Naive thymus-derived CD4-positive, alpha-beta T cell (primary cell): ENCODE measurements at regions of chr20 and their contacts with region 1.

Region 1: GRCh38 chr20:16729565-16730456 is at the start of gene SNRPB2:
- DNase-seq: peak; percentile 75 to 94 (median 90)
- ATAC-seq: peak; percentile 98
- H3K4me3 ChIP-seq: peak within 1 kb of the TSS; percentile 93
- H3K4me3 Mint-ChIP-seq: peak within 1 kb of the TSS; percentile 87 to 100 (median 99)
- H3K27ac ChIP-seq: peak within 1 kb of the TSS; percentile 94
- H3K27ac Mint-ChIP-seq: peak within 1 kb of the TSS; percentile 98 to 100 (median 100)
- H3K4me1 ChIP-seq: peaks cover 30 to 40% of the 10 kb centered on the region in 2 donors
- H3K4me1 Mint-ChIP-seq: peaks cover 32 to 60% (median 56%) of the 10 kb centered on the region in 7 donors
- H3K27me3 ChIP-seq: no peaks in the 10 kb centered on the region
- H3K27me3 Mint-ChIP-seq: peaks cover 9 to 25% (median 15%) of the 10 kb centered on the region in 5 donors
- total RNA-seq, gene SNRPB2: 30.8 to 97.0 (median 40.0) TPM

Region 2: DNA sequence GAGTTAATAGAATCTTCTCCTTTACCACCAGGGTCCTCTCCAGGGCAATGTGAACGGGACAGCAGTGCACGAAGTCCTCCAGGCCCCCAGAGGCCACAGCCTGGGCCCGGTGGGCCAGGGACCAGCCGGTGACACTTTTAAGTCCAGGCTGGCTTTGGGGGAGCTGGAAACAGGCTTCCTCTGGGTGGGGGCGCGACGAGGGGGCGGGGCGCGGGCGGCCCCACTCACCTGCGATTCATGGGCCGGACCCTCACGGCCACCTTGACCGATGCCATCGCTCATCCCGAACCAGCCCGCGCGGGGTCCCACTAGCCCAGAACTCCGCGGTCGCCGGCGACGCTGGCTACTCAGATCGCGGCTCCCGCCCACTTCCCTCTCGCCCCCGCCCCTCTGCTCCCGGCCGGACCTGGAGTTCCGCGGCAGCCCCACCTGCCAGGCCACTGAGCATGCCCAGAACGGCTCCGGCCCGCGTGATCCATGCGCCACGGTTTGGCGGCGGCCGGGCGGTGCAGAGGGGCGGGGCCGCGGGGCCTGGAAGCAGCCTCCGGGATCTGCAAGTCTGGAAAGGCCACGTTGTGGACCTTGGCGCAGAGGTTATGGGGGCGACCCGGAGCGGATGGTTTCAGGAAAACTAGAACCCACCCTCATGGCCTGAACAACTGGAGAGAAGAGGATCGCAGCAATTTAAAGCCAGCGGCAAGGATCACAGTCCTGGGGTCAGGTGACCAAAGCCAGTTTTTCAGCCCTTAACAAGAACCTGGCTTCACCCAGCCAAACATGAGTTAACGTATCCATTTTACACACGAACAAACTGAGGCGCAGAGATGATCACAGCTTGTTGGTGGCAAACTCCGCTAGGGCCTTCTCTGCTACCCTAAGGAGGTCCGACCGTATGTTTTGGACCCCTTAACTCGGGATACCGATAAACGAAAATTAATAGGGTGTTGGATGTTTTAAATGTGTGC is 156.5 kb before region 1 on chr20 and contains the start of gene KIF16B:
- CTCF ChIA-PET with region 1: no interaction called
- POLR2A ChIA-PET with region 1: interaction called, 19 read pairs
- intact Hi-C with region 1: loop called (anchors 1 kb)
- DNase-seq: peak; percentile 62 to 97 (median 76)
- ATAC-seq: peak; percentile 88
- H3K4me3 ChIP-seq: peak within 1 kb of the TSS; percentile 78
- H3K4me3 Mint-ChIP-seq: peak within 1 kb of the TSS; percentile 88 to 97 (median 92)
- H3K27ac ChIP-seq: peak within 1 kb of the TSS; percentile 61
- H3K27ac Mint-ChIP-seq: peak within 1 kb of the TSS; percentile 52 to 90 (median 85)
- H3K4me1 ChIP-seq: peaks cover 9 to 11% of the 10 kb centered on the region in 2 donors
- H3K4me1 Mint-ChIP-seq: peaks cover 16 to 61% (median 50%) of the 10 kb centered on the region in 7 donors
- H3K27me3 ChIP-seq: no peaks in the 10 kb centered on the region
- H3K27me3 Mint-ChIP-seq: peaks cover 0 to 8% (median 0%) of the 10 kb centered on the region in 5 donors
- total RNA-seq, gene KIF16B: 8.4 to 13.7 (median 11.0) TPM

Region 3: DNA sequence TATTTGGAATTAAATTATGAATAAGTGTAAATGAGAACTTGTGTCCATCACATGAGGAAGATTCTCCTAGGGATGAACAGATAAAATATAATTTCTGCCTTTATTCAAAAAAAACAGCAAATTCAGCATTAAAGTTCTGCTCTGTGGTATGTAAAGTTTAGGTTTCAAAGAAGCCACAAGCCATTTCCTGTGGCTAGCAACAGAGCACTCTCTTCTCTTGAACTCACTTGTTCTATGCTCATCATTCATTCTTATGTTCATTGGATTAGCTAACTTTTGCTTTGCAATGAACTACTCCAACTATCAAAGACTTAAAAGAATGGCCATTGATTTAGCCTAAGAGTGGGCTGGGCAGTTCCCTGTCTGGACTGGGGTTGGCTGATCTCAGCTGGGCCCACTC is 20.8 kb before region 1 on chr20:
- CTCF ChIA-PET with region 1: no interaction called
- POLR2A ChIA-PET with region 1: interaction called, 13 read pairs
- intact Hi-C with region 1: loop called (anchors 1 kb)
- DNase-seq: peak in 7 of 9 donors; percentile 16 to 62 (median 45)
- ATAC-seq: peak; percentile 79
- H3K4me3 ChIP-seq: no peak overlapping the region
- H3K4me3 Mint-ChIP-seq: peak overlapping the region in 9 of 10 donors; percentile 25 to 81 (median 63)
- H3K27ac ChIP-seq: no peak overlapping the region
- H3K27ac Mint-ChIP-seq: peak overlapping the region in 7 of 9 donors; percentile 32 to 79 (median 45)
- H3K4me1 ChIP-seq: peaks cover 17 to 27% of the 10 kb centered on the region in 2 donors
- H3K4me1 Mint-ChIP-seq: peaks cover 26 to 52% (median 42%) of the 10 kb centered on the region in 7 donors
- H3K27me3 ChIP-seq: no peaks in the 10 kb centered on the region
- H3K27me3 Mint-ChIP-seq: peaks cover 0 to 40% (median 9%) of the 10 kb centered on the region in 5 donors

Region 4: GRCh38 chr20:18137412-18138265 is 1407.8 kb after region 1 on chr20 and contains the starts of genes KAT14 and PET117:
- CTCF ChIA-PET with region 1: no interaction called
- POLR2A ChIA-PET with region 1: interaction called, 3 read pairs
- intact Hi-C with region 1: loop called (anchors 5 kb)
- DNase-seq: peak; percentile 85 to 96 (median 93)
- ATAC-seq: peak; percentile 98
- H3K4me3 ChIP-seq: peak within 1 kb of the TSS; percentile 99
- H3K4me3 Mint-ChIP-seq: peak within 1 kb of the TSS; percentile 76 to 92 (median 88)
- H3K27ac ChIP-seq: peak within 1 kb of the TSS; percentile 89
- H3K27ac Mint-ChIP-seq: peak within 1 kb of the TSS; percentile 85 to 95 (median 92)
- H3K4me1 ChIP-seq: peaks cover 13 to 15% of the 10 kb centered on the region in 2 donors
- H3K4me1 Mint-ChIP-seq: peaks cover 23 to 44% (median 31%) of the 10 kb centered on the region in 7 donors
- H3K27me3 ChIP-seq: no peaks in the 10 kb centered on the region
- H3K27me3 Mint-ChIP-seq: peaks cover 0 to 7% (median 0%) of the 10 kb centered on the region in 5 donors
- total RNA-seq, gene KAT14: 12.3 to 26.7 (median 16.2) TPM
- total RNA-seq, gene PET117: 9.0 to 20.3 (median 11.7) TPM

Region 5: GRCh38 chr20:18466894-18467730 is 1737.3 kb after region 1 on chr20 and contains the starts of genes DZANK1 and POLR3F:
- CTCF ChIA-PET with region 1: no interaction called
- POLR2A ChIA-PET with region 1: no interaction called
- intact Hi-C with region 1: loop called in 1 of 2 experiments (anchors 10 kb)
- DNase-seq: peak; percentile 85 to 93 (median 92)
- ATAC-seq: peak; percentile 97
- H3K4me3 ChIP-seq: peak within 1 kb of the TSS; percentile 93
- H3K4me3 Mint-ChIP-seq: peak within 1 kb of the TSS; percentile 89 to 99 (median 97)
- H3K27ac ChIP-seq: peak within 1 kb of the TSS; percentile 77
- H3K27ac Mint-ChIP-seq: peak within 1 kb of the TSS; percentile 93 to 99 (median 98)
- H3K4me1 ChIP-seq: peaks cover 7 to 14% of the 10 kb centered on the region in 2 donors
- H3K4me1 Mint-ChIP-seq: peaks cover 25 to 44% (median 37%) of the 10 kb centered on the region in 7 donors
- H3K27me3 ChIP-seq: no peaks in the 10 kb centered on the region
- H3K27me3 Mint-ChIP-seq: no peaks in the 10 kb centered on the region
- total RNA-seq, gene DZANK1: 1.2 to 3.5 (median 2.9) TPM
- total RNA-seq, gene POLR3F: 5.0 to 13.5 (median 11.5) TPM